ENCODE measurements at regions of chr12 and their contacts with region 1.

Region 1: GRCh38 chr12:54368709-54369583 is 4.7 kb upstream of the GPR84 start:
- DNase-seq: peak; percentile 85
- H3K4me3 ChIP-seq: peak overlapping the region; percentile 27; the same call in 1 of the 2 replicates
- H3K27ac ChIP-seq: peak overlapping the region; percentile 24
- H3K27me3 ChIP-seq: no peaks in the 10 kb centered on the region
- CTCF ChIP-seq: peak; percentile 94

Region 2: GRCh38 chr12:54220092-54220557 is 148.8 kb before region 1 on chr12:
- CTCF ChIA-PET with region 1: interaction called, 19 read pairs
- POLR2A ChIA-PET with region 1: no interaction called
- DNase-seq: peak; percentile 53
- H3K4me3 ChIP-seq: no peak overlapping the region
- H3K27ac ChIP-seq: no peak overlapping the region
- H3K27me3 ChIP-seq: no peaks in the 10 kb centered on the region
- CTCF ChIP-seq: peak; percentile 88

Region 3: DNA sequence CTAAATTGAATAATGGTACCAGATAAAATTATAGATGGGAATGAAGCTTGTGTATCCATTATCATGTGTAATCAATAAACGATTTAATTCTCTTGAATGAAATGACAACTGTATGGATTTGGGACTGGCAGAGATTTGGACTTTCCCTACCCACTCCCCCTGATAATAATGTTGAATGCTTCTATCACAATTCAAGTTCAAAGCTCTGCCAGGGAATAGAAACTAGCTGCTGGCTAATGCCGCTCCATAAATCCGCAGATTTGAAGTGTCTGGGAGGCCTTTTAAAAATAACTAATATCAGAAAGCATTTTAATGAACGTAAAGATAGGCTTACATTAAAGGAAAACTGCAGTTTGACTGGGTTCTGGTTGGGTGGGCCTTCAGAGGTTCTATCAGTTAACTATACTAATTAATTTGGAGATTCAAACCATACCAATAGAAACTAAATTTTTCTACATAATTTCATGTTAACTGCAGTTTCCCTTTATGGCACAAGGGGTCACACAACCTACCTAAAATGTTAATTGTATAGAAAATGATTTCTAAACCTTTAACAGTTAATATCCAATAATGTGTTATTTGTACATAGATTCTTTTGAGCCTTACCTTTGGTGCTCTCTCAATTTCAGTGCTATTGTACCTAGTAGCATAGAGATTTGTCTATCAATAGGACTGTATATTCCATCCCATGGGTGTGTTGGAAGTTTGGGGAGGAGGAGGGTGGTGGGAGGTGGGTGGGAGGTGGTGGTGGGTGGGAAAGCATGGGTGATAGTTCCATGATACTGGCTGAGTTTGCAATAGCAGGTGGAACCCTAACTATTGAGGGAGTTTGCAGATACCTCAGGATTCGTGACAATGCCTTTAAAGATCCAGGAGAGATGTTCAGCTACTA is 83.5 kb before region 1 on chr12:
- CTCF ChIA-PET with region 1: interaction called, 14 read pairs
- POLR2A ChIA-PET with region 1: interaction called, 9 read pairs
- DNase-seq: no peak
- H3K4me3 ChIP-seq: 0 out of 2 replicates have a peak overlapping the region, but pooled peaks have one; percentile 7
- H3K27ac ChIP-seq: peak overlapping the region; percentile 31
- H3K27me3 ChIP-seq: no peaks in the 10 kb centered on the region
- CTCF ChIP-seq: peak; percentile 46

Region 4: GRCh38 chr12:54294152-54294952 is 74.6 kb before region 1 on chr12:
- CTCF ChIA-PET with region 1: interaction called, 37 read pairs
- POLR2A ChIA-PET with region 1: interaction called, 3 read pairs
- DNase-seq: no peak
- H3K4me3 ChIP-seq: no peak overlapping the region
- H3K27ac ChIP-seq: no peak overlapping the region
- H3K27me3 ChIP-seq: peaks cover 13% of the 10 kb centered on the region
- CTCF ChIP-seq: peak; percentile 82

Region 5: GRCh38 chr12:54337280-54337842 is 31.6 kb before region 1 on chr12:
- CTCF ChIA-PET with region 1: interaction called, 23 read pairs
- POLR2A ChIA-PET with region 1: interaction called, 3 read pairs
- DNase-seq: no peak
- H3K4me3 ChIP-seq: no peak overlapping the region
- H3K27ac ChIP-seq: no peak overlapping the region
- H3K27me3 ChIP-seq: no peaks in the 10 kb centered on the region
- CTCF ChIP-seq: peak; percentile 11; the same call in 1 of the 2 replicates

Region 6: DNA sequence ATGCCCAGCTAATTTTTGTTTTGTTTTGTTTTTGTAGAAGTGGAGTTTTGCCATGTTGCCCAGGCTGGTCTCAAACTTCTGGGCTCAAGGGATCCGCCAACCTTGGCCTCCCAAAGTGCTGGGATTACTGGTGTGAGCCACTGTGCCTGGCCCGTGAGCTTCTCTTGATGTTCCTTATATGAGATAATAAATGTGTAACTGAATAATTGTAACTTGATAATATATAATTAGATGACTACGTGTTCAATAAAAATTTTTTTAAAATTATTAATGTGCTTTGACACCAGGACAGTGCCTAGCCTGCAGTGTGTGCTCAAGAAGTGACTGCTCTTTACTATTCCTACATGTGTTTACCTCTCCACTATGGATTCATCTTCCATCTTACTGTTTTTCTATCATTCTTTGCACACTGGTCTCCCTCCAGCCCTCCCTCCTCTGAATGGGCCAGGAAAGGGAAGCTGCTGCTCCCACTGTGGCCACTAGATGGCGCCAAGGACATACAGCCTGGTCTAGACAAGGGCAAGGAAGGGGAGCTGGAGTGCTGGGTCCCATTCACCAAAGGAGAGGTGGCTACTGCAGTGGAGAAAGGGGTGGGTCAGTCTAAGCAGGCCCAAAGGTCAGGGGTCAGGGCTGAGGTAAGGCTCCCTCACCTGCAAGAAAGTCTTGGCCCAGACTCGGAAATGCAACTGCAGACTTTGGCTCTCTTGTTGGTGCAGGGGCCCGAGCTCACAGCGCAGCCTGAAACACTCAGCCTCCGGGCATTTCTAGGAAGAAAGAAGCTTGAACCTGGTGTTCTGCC is 30.2 kb after region 1 on chr12:
- CTCF ChIA-PET with region 1: interaction called, 20 read pairs
- POLR2A ChIA-PET with region 1: no interaction called
- DNase-seq: peak; percentile 61
- H3K4me3 ChIP-seq: no peak overlapping the region
- H3K27ac ChIP-seq: no peak overlapping the region
- H3K27me3 ChIP-seq: no peaks in the 10 kb centered on the region
- CTCF ChIP-seq: peak; percentile 100

Region 7: DNA sequence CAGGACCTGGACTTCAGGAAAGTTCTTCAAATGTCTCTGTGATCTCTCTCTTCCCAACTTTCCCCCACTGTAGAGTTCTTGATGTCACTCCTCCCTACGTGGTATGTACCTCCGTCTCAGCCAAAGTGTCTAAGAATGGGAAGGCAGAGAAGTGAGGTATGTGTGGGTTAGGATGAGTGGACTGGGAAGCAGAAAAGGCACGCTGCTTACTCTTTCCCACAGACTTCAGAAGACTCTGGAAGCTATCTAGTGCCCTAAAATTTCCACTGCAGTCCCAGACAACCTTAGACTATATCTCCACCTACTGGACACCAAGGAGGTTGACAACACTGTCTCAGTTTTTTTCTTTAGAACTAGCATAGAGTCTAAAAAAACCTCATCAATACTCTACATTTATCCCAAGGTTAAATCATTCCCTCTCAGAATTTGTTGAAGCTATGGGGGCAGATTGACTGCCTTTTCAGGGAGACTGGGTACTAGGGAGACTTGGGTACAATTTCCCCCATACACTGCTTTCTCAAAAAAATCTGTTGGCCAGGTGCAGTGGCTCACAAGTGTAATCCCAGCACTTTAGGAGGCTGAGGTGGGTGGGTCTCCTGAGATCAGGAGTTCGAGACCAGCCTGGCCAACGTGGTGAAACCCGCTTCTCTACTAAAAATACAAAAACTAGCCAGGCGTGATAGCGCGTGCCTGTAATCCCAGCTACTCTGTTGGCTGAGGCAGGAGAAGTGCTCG is 70.7 kb after region 1 on chr12:
- CTCF ChIA-PET with region 1: interaction called, 62 read pairs
- POLR2A ChIA-PET with region 1: no interaction called
- DNase-seq: peak; percentile 60
- H3K4me3 ChIP-seq: no peak overlapping the region
- H3K27ac ChIP-seq: no peak overlapping the region
- H3K27me3 ChIP-seq: peaks cover 8% of the 10 kb centered on the region
- CTCF ChIP-seq: peak; percentile 87

Region 8: GRCh38 chr12:54486173-54486867 is 117.4 kb after region 1 on chr12:
- CTCF ChIA-PET with region 1: no interaction called
- POLR2A ChIA-PET with region 1: no interaction called
- DNase-seq: no peak
- H3K4me3 ChIP-seq: no peak overlapping the region
- H3K27ac ChIP-seq: no peak overlapping the region
- H3K27me3 ChIP-seq: no peaks in the 10 kb centered on the region
- CTCF ChIP-seq: no peak

Region 9: GRCh38 chr12:54509617-54510016 is 140.7 kb after region 1 on chr12:
- CTCF ChIA-PET with region 1: no interaction called
- POLR2A ChIA-PET with region 1: no interaction called
- DNase-seq: no peak
- H3K4me3 ChIP-seq: no peak overlapping the region
- H3K27ac ChIP-seq: no peak overlapping the region
- H3K27me3 ChIP-seq: peaks cover 5% of the 10 kb centered on the region
- CTCF ChIP-seq: no peak

Measured in AG04450 (cell line).